ENCODE measurements at regions of chr3 and their contacts with region 1.

Region 1: GRCh38 chr3:134904241-134904771 is 109.2 kb downstream of the EPHB1 start:
- DNase-seq: peak; percentile 97
- ATAC-seq: peak; percentile 94
- H3K4me3 ChIP-seq: peak overlapping the region; percentile 27; the same call in 1 of the 2 replicates
- H3K27ac ChIP-seq: peak overlapping the region; percentile 79
- H3K4me1 ChIP-seq: peaks cover 39% of the 10 kb centered on the region
- H3K27me3 ChIP-seq: no peaks in the 10 kb centered on the region
- CTCF ChIP-seq: no peak
- EP300 ChIP-seq: peak; percentile 98 to 99
- POLR2A ChIP-seq: no peak
- RAD21 ChIP-seq: 0 out of 2 replicates have a peak, but pooled peaks have one; percentile 16

Region 2: DNA sequence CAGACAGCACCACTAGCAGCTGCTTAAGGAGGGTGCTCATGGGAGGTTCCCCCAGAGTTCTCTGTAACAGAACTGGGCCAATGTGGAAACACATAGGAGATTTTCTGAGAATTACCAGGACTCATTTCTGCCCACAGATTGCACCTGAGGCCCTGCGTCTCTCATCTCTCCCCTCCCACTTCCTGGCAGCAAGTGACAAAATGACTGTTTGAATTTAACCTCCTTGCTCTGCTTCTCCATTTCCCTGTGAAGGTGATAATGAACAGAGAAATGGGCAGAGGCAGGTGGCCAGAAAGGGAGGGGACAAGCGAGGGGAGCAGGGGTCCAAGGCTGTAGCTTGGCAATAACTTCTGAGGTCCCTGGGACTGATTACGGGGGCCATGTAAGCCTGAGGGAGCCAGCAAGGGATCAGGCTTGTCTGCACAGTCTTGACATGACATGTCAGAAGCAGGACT is 101.2 kb before region 1 on chr3:
- CTCF ChIA-PET with region 1: interaction called, 39 read pairs
- POLR2A ChIA-PET with region 1: interaction called, 4 read pairs
- RAD21 ChIA-PET with region 1: interaction called, 111 read pairs
- SMC1A ChIA-PET with region 1: interaction called, 110 read pairs
- in situ Hi-C with region 1: no loop called
- intact Hi-C with region 1: no loop called
- DNase-seq: peak; percentile 64
- ATAC-seq: peak; percentile 68
- H3K4me3 ChIP-seq: no peak overlapping the region
- H3K27ac ChIP-seq: peak overlapping the region; percentile 47
- H3K4me1 ChIP-seq: peaks cover 26% of the 10 kb centered on the region
- H3K27me3 ChIP-seq: no peaks in the 10 kb centered on the region
- CTCF ChIP-seq: no peak
- EP300 ChIP-seq: peak; percentile 60 to 71; a peak in 2 of 4 replicates
- POLR2A ChIP-seq: no peak
- RAD21 ChIP-seq: no peak

Region 3: GRCh38 chr3:134885877-134886621 is 18.3 kb before region 1 on chr3:
- CTCF ChIA-PET with region 1: interaction called, 58 read pairs
- POLR2A ChIA-PET with region 1: interaction called, 11 read pairs
- RAD21 ChIA-PET with region 1: interaction called, 67 read pairs
- SMC1A ChIA-PET with region 1: interaction called, 97 read pairs
- in situ Hi-C with region 1: no loop called
- intact Hi-C with region 1: loop called (anchors 1 kb)
- DNase-seq: peak; percentile 95
- ATAC-seq: peak; percentile 94
- H3K4me3 ChIP-seq: 0 out of 2 replicates have a peak overlapping the region, but pooled peaks have one; percentile 9
- H3K27ac ChIP-seq: peak overlapping the region; percentile 54
- H3K4me1 ChIP-seq: peaks cover 29% of the 10 kb centered on the region
- H3K27me3 ChIP-seq: no peaks in the 10 kb centered on the region
- CTCF ChIP-seq: peak; percentile 33 to 51 (median 41); a peak in 4 of 6 replicates
- EP300 ChIP-seq: peak; percentile 71 to 88
- POLR2A ChIP-seq: no peak
- RAD21 ChIP-seq: 0 out of 2 replicates have a peak, but pooled peaks have one; percentile 10

Region 4: DNA sequence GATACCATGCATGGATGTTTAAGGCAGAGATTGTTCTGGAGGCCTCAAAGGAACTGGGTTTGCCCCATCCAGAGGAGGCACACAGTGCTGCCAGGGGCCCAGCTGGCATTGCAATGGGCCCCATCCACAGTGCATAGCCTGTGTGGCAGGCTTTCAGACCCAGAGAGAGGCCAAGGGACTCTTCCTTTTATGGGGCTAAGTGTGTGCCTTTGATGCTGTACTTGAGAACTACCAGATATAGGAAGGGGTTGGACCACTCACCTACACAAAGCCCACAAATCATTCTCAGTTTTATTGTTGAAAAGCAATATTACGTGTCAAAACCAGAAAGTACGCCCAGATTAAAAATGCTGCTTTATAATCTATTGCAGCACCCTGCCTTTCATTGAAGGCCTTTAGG is 25.7 kb after region 1 on chr3:
- CTCF ChIA-PET with region 1: no interaction called
- POLR2A ChIA-PET with region 1: no interaction called
- RAD21 ChIA-PET with region 1: interaction called, 8 read pairs
- SMC1A ChIA-PET with region 1: interaction called, 7 read pairs
- in situ Hi-C with region 1: no loop called
- intact Hi-C with region 1: loop called (anchors 2 kb)
- DNase-seq: peak; percentile 48
- ATAC-seq: peak; percentile 96
- H3K4me3 ChIP-seq: no peak overlapping the region
- H3K27ac ChIP-seq: peak overlapping the region; percentile 65
- H3K4me1 ChIP-seq: peaks cover 27% of the 10 kb centered on the region
- H3K27me3 ChIP-seq: no peaks in the 10 kb centered on the region
- CTCF ChIP-seq: no peak
- EP300 ChIP-seq: no peak
- POLR2A ChIP-seq: no peak
- RAD21 ChIP-seq: no peak

Region 5: GRCh38 chr3:134992180-134992579 is 87.9 kb after region 1 on chr3:
- CTCF ChIA-PET with region 1: no interaction called
- POLR2A ChIA-PET with region 1: no interaction called
- RAD21 ChIA-PET with region 1: interaction called, 5 read pairs
- SMC1A ChIA-PET with region 1: interaction called, 10 read pairs
- in situ Hi-C with region 1: no loop called
- intact Hi-C with region 1: no loop called
- DNase-seq: no peak
- ATAC-seq: no peak; the same call in 2 of the 3 replicates
- H3K4me3 ChIP-seq: no peak overlapping the region
- H3K27ac ChIP-seq: 0 out of 2 replicates have a peak overlapping the region, but pooled peaks have one; percentile 2
- H3K4me1 ChIP-seq: peaks cover 17% of the 10 kb centered on the region
- H3K27me3 ChIP-seq: no peaks in the 10 kb centered on the region
- CTCF ChIP-seq: no peak
- EP300 ChIP-seq: no peak
- POLR2A ChIP-seq: no peak
- RAD21 ChIP-seq: no peak

Region 6: DNA sequence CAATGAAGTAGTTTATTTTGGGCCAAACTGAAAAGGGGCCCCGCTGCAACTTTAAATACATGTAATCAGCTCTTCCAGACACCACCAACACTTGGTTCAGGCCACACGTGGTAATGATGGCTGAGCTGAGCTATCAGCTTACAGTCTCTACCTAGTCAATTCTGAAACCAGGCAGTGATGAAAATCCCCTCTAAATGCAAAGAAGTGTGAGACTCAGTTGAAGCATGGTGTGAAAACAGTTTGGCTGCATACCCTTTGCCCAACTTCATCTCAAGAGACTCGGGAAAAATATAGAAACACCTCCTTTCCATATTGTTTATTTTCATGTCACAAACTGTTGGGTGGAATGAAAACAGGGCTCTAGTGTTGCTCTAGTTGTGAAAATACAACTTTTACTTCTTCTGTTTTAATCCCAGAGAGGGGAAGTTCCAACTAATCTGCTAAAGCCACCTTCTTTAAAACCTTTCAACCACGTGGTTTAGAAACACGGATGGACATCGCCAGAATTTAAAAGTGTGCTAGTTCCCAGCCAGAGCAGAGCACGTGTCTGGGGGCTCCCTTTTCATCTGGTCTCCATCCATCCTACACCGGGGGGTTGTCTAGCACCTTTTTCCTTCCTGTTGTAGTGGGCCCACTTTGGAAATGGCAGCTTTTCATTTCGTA is 119.8 kb after region 1 on chr3:
- CTCF ChIA-PET with region 1: interaction called, 6 read pairs
- POLR2A ChIA-PET with region 1: interaction called, 4 read pairs
- RAD21 ChIA-PET with region 1: interaction called, 18 read pairs
- SMC1A ChIA-PET with region 1: interaction called, 4 read pairs
- in situ Hi-C with region 1: no loop called
- intact Hi-C with region 1: no loop called
- DNase-seq: peak; percentile 60
- ATAC-seq: peak; percentile 99
- H3K4me3 ChIP-seq: no peak overlapping the region
- H3K27ac ChIP-seq: peak overlapping the region; percentile 48
- H3K4me1 ChIP-seq: peaks cover 1% of the 10 kb centered on the region; the same call in 1 of the 2 replicates
- H3K27me3 ChIP-seq: no peaks in the 10 kb centered on the region
- CTCF ChIP-seq: no peak
- EP300 ChIP-seq: no peak; a peak in 1 of 4 replicates
- POLR2A ChIP-seq: no peak
- RAD21 ChIP-seq: no peak